CD14-positive monocyte (primary cell): ENCODE measurements at regions of chr18 and their contacts with region 1.

Region 1: GRCh38 chr18:36129300-36130038 is at the starts of genes ELP2 and SLC39A6:
- DNase-seq: peak; percentile 94 to 96 (median 95)
- H3K4me3 ChIP-seq: peak within 1 kb of the TSS; percentile 55 to 98 (median 92)
- H3K4me3 Mint-ChIP-seq: peak within 1 kb of the TSS; percentile 94
- H3K27ac ChIP-seq: peak within 1 kb of the TSS; percentile 91 to 100
- H3K27ac Mint-ChIP-seq: peak within 1 kb of the TSS; percentile 95 to 99 (median 97)
- H3K4me1 ChIP-seq: peaks cover 30 to 33% of the 10 kb centered on the region in 2 donors
- H3K4me1 Mint-ChIP-seq: peaks cover 38% of the 10 kb centered on the region
- H3K27me3 ChIP-seq: no peaks in the 10 kb centered on the region
- H3K27me3 Mint-ChIP-seq: peaks cover 0 to 2% (median 2%) of the 10 kb centered on the region in 3 donors
- CTCF ChIP-seq: no peak
- polyA plus RNA-seq, gene ELP2: 24.8 to 52.5 (median 27.1) TPM
- polyA plus RNA-seq, gene SLC39A6: 13.2 to 20.1 (median 16.8) TPM

Region 2: GRCh38 chr18:35972197-35973052 is 157.0 kb before region 1 on chr18 and contains the start of gene RMP24:
- intact Hi-C with region 1: loop called (anchors 2 to 10 kb)
- DNase-seq: peak; percentile 91 to 94 (median 92)
- H3K4me3 ChIP-seq: peak within 1 kb of the TSS; percentile 85 to 91 (median 88)
- H3K4me3 Mint-ChIP-seq: peak within 1 kb of the TSS; percentile 98 to 99
- H3K27ac ChIP-seq: peak within 1 kb of the TSS; percentile 77 to 88
- H3K27ac Mint-ChIP-seq: peak within 1 kb of the TSS; percentile 94 to 99 (median 97)
- H3K4me1 ChIP-seq: peaks cover 25 to 41% of the 10 kb centered on the region in 2 donors
- H3K4me1 Mint-ChIP-seq: peaks cover 41% of the 10 kb centered on the region
- H3K27me3 ChIP-seq: no peaks in the 10 kb centered on the region
- H3K27me3 Mint-ChIP-seq: no peaks in the 10 kb centered on the region
- CTCF ChIP-seq: no peak

Region 3: DNA sequence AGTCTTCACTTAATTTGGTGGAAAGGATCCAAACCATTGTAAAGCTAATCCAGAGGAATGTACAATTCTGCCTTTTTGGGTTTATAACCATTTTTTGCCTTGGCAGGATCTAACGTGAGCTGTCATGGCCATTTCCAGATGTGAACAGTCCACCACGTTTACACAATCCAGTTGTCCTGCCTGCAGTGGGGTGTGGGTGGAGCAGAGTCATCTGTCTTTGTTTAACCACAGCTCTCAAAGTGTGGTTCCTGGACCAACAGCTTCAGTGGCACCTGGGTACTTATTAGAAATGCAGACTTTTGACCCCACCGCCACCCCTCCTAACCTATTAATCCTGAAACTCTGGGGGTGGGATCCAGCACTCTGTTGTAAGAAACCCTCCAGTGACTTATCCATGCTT is 203.9 kb after region 1 on chr18:
- intact Hi-C with region 1: no loop called
- DNase-seq: no peak
- H3K4me3 ChIP-seq: no peak overlapping the region
- H3K4me3 Mint-ChIP-seq: no peak overlapping the region
- H3K27ac ChIP-seq: no peak overlapping the region
- H3K27ac Mint-ChIP-seq: no peak overlapping the region
- H3K4me1 ChIP-seq: no peaks in the 10 kb centered on the region
- H3K4me1 Mint-ChIP-seq: no peaks in the 10 kb centered on the region
- H3K27me3 ChIP-seq: no peaks in the 10 kb centered on the region
- H3K27me3 Mint-ChIP-seq: peaks cover 4 to 10% (median 10%) of the 10 kb centered on the region in 3 donors
- CTCF ChIP-seq: no peak

Region 4: DNA sequence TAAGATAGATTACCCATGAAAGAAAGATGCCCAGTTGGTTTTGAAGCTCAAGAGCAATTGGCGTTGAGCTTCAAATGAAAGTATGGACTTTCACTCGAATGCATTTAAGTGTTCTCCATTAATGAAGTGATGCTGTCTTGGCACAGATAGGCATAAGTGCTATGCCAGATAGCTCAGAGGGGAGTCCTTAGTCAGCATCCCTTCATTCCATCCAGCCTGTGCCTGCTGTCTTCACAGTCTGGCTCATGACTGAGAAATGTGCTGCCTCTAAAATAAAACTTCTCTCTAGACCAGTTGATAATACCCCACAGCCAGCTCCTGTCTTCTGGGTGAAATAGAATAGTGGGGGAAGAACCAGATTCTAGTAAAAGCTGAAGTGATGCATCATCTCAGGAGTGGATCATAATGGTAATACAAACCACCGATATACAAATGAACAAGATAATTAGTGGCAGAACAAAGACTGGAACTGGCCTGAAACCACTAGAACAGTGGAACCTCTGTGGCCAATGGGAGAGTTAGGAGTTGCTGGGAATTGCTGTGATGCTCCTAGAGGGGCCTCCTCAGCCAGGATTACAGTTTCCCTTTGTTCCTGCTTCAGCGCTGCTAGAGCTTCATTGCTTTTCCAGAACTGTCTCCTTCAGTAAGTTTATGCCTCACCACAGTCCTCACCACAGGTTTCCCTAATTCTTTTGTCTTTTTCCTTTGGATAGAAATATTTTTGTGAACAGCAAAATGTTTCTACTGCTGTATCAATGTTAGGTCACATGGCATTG is 1058.7 kb after region 1 on chr18:
- intact Hi-C with region 1: no loop called
- DNase-seq: no peak
- H3K4me3 ChIP-seq: no peak overlapping the region
- H3K4me3 Mint-ChIP-seq: no peak overlapping the region
- H3K27ac ChIP-seq: no peak overlapping the region
- H3K27ac Mint-ChIP-seq: no peak overlapping the region
- H3K4me1 ChIP-seq: no peaks in the 10 kb centered on the region
- H3K4me1 Mint-ChIP-seq: no peaks in the 10 kb centered on the region
- H3K27me3 ChIP-seq: no peaks in the 10 kb centered on the region
- H3K27me3 Mint-ChIP-seq: peaks cover 0 to 2% (median 0%) of the 10 kb centered on the region in 3 donors
- CTCF ChIP-seq: no peak